ENCODE measurements at regions of chr6 and their contacts with region 1.

Region 1: DNA sequence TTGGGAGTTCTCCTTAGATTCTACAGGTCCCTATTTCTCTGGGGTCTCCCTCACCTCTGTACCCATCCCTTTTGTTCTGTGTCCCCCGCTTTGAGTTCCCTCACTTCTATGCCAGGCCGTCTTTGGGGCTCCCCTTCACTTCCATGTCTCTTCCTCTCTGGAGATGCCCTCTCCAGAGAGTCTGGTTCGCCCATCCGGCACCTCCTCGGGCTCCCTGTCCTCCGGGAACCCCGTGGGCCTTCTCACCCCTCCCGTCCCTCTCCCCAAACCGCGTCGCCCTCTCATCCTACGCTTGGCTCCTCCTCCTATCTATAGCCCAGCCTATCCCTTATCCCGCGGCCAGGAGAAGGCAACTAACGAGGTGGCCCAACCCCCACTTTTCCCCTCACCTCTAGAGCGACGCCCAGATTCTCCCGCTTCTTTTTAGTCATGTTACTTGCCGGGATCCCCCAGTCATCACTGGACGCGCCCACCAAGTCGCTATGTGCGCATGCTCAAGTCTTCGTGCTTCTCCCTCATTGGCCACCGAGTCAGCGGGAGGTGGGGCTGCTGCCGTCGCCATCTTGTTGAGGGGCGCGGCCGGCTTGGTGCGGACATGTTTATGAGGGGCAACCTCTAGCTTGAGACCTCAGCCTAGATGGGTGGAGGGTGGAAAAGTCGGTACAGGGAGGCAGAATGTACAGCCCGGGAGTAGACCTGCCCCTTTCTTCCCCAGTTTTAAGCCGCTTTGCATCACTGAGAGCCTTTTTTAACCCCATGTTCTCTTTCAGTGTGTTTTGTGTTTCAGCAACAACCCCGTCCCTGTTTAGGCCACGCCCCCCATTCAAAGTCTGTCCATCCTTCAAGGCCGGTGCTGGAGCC is at the start of gene CCDC167:
- DNase-seq: peak; percentile 96
- ATAC-seq: peak; percentile 89
- H3K4me3 ChIP-seq: peak within 1 kb of the TSS; percentile 84
- H3K27ac ChIP-seq: peak within 1 kb of the TSS; percentile 92
- H3K4me1 ChIP-seq: peaks cover 47% of the 10 kb centered on the region
- H3K27me3 ChIP-seq: no peaks in the 10 kb centered on the region
- CTCF ChIP-seq: no peak
- EP300 ChIP-seq: no peak
- POLR2A ChIP-seq: peak; percentile 72
- RAD21 ChIP-seq: no peak
- polyA plus RNA-seq, gene CCDC167: 323 to 380 TPM

Region 2: DNA sequence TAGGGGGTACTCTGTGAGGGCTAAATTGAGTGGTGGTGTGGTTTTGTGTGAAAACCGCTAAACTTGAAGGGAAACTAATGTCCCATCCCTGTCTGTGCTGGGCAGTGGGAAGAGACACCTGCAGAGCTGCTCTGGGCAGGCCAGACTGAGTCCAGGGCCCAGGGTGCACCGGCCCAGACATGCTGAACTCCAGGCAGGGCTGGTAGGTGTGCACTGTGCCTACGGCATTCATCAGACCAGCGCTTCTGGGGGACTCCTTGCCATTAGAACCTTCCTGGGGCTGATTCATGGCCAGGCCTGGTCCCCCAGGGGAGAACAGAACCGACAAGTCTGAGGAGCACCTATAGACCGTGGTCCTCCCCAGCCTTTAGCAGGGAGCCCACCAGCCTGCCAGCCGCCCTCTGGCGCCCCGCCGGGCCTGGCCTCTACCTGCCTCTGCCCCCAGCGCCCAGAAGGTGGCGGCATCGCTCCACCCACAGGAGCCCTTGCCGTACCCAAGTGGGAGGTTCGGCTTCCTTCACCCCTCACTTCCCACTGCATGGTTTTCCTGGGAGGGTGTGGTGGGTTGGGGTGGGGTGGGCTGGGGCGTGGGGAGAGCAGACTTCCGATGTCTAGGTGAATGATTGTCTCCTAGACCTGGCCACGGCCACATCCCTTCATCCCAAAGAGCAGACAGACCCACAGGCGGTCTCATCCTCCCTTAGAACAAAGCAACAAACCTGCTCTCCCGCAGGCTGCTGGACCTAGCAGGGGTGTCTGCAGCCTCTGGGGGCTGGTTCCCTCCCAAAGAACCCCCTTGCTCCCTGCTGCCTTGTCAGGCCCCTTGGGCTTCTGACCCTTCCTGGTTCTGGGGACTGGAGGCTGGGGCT is 15.5 kb before region 1 on chr6:
- CTCF ChIA-PET with region 1: interaction called, 18 read pairs
- POLR2A ChIA-PET with region 1: interaction called, 3 read pairs
- RAD21 ChIA-PET with region 1: interaction called, 5 read pairs
- SMC1A ChIA-PET with region 1: interaction called, 4 read pairs
- in situ Hi-C with region 1: no loop called
- intact Hi-C with region 1: no loop called
- DNase-seq: no peak
- ATAC-seq: peak; percentile 93
- H3K4me3 ChIP-seq: no peak overlapping the region
- H3K27ac ChIP-seq: no peak overlapping the region
- H3K4me1 ChIP-seq: peaks cover 7% of the 10 kb centered on the region; the same call in 1 of the 2 replicates
- H3K27me3 ChIP-seq: no peaks in the 10 kb centered on the region
- CTCF ChIP-seq: peak; percentile 85 to 97 (median 96); a peak in 5 of 6 replicates
- EP300 ChIP-seq: no peak
- POLR2A ChIP-seq: no peak; the same call in 1 of the 2 replicates
- RAD21 ChIP-seq: peak; percentile 97

Region 3: DNA sequence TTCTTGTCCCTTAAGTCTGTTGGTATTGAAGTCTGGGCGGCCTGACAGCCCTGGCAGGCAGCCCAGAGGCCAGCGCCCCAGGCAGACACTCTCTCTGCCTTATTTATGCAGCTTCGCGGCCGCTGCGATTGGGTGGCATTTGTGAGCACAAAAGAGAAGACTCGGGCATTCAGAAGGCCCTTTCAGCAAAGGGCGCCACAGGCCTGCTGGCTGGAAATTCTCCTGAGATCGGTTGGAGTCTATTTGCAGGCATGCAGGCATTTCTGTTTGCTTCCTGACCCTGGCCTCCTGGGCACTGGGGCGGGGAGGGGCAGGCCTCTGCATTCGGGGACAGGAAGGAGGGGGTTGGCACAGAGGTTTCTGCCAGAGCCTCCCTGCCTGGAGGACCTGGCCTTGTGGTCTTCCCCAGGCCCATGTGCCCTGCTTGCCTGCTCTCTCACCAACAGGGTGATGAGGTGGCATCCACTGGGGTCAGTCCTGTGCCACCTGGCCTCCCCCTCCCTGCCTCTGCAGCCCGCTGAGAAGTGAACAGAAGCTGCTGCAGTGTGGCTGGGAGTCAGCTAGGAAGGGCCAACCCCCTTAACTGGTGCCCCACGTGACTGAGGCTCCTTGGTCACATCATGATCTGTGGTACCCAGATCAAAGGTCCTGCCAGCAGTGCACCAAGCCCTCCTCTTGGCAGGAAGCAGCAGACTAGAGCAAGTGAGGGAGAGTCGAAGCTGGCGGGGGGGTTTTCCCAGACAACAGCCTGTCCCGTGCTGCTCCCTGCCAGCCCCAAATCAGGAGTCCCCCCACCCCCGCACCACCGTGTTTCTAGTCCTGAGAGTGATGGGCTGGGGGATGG is 16.6 kb after region 1 on chr6:
- CTCF ChIA-PET with region 1: interaction called, 9 read pairs
- POLR2A ChIA-PET with region 1: interaction called, 31 read pairs
- RAD21 ChIA-PET with region 1: interaction called, 19 read pairs
- SMC1A ChIA-PET with region 1: interaction called, 31 read pairs
- in situ Hi-C with region 1: no loop called
- intact Hi-C with region 1: no loop called
- DNase-seq: peak; percentile 78
- ATAC-seq: peak; percentile 94
- H3K4me3 ChIP-seq: 0 out of 2 replicates have a peak overlapping the region, but pooled peaks have one; percentile 10
- H3K27ac ChIP-seq: peak overlapping the region; percentile 65
- H3K4me1 ChIP-seq: peaks cover 33% of the 10 kb centered on the region
- H3K27me3 ChIP-seq: no peaks in the 10 kb centered on the region
- CTCF ChIP-seq: peak in 2 of 3 experiments; percentile 3 to 11; a peak in 1 of 6 replicates
- EP300 ChIP-seq: peak in 1 of 2 experiments; percentile 26; a peak in 1 of 4 replicates
- POLR2A ChIP-seq: peak; percentile 69
- RAD21 ChIP-seq: no peak

Region 4: DNA sequence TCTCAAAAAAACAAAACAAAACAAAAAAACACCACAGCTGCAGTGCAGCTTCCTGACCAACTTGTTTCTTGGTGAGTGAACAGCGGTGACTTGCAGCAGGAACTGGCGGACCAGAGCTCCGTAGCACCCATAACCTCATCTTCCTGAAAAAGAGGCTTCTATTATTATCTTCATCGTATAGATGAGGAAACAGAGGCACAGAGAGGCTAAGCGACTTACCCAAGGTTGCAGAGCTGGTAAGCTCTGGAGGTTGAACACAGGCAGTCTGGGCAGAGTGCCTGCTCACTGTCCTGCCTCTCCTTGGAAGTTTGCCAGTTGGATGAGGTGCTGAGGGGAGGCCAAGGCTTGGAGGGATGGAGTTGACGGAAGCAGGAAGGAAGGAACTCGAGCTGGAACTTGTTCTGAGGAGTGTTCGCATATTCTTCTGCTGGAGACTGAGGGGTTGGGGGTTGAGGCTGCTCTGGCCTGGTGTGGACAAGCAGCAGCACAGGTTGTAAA is 48.0 kb after region 1 on chr6:
- CTCF ChIA-PET with region 1: interaction called, 4 read pairs
- POLR2A ChIA-PET with region 1: interaction called, 4 read pairs
- RAD21 ChIA-PET with region 1: interaction called, 8 read pairs
- SMC1A ChIA-PET with region 1: interaction called, 6 read pairs
- in situ Hi-C with region 1: loop called (anchors 10 kb)
- intact Hi-C with region 1: no loop called
- DNase-seq: no peak
- ATAC-seq: peak; percentile 38
- H3K4me3 ChIP-seq: no peak overlapping the region
- H3K27ac ChIP-seq: peak overlapping the region; percentile 83
- H3K4me1 ChIP-seq: peaks cover 64% of the 10 kb centered on the region
- H3K27me3 ChIP-seq: no peaks in the 10 kb centered on the region
- CTCF ChIP-seq: no peak
- EP300 ChIP-seq: no peak
- POLR2A ChIP-seq: no peak
- RAD21 ChIP-seq: no peak

Region 5: GRCh38 chr6:37554480-37554819 is 54.8 kb after region 1 on chr6:
- CTCF ChIA-PET with region 1: interaction called, 5 read pairs
- POLR2A ChIA-PET with region 1: interaction called, 45 read pairs
- RAD21 ChIA-PET with region 1: interaction called, 15 read pairs
- SMC1A ChIA-PET with region 1: interaction called, 16 read pairs
- in situ Hi-C with region 1: loop called (anchors 10 kb)
- intact Hi-C with region 1: loop called (anchors 2 kb)
- DNase-seq: no peak
- ATAC-seq: peak; percentile 8
- H3K4me3 ChIP-seq: peak overlapping the region; percentile 81
- H3K27ac ChIP-seq: peak overlapping the region; percentile 91
- H3K4me1 ChIP-seq: peaks cover 86% of the 10 kb centered on the region
- H3K27me3 ChIP-seq: no peaks in the 10 kb centered on the region
- CTCF ChIP-seq: no peak
- EP300 ChIP-seq: no peak
- POLR2A ChIP-seq: no peak
- RAD21 ChIP-seq: no peak

Region 6: DNA sequence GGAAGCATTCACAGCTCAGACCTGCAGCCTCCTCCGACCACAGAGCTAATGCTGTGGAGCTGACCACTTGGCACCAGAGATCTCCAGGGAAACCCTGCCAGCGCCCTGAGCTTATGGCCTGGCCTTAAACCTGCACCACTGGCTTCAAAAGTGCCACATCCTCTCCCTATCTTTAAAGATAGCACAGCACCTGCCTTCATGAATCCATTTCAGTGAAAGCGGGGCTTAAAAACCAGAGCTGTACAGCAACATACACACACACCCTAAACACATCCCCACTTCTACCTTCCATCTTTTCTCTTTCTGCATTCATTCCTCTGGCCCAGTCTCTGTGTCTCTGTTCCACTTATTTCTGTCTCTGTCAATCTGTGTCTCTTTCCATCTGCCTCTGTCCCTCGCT is 59.8 kb after region 1 on chr6:
- CTCF ChIA-PET with region 1: interaction called, 13 read pairs
- POLR2A ChIA-PET with region 1: interaction called, 53 read pairs
- RAD21 ChIA-PET with region 1: interaction called, 23 read pairs
- SMC1A ChIA-PET with region 1: interaction called, 18 read pairs
- in situ Hi-C with region 1: loop called (anchors 10 kb)
- intact Hi-C with region 1: loop called (anchors 2 kb)
- DNase-seq: no peak
- ATAC-seq: no peak
- H3K4me3 ChIP-seq: peak overlapping the region; percentile 11; the same call in 1 of the 2 replicates
- H3K27ac ChIP-seq: peak overlapping the region; percentile 91
- H3K4me1 ChIP-seq: peaks cover 88% of the 10 kb centered on the region
- H3K27me3 ChIP-seq: no peaks in the 10 kb centered on the region
- CTCF ChIP-seq: no peak
- EP300 ChIP-seq: no peak
- POLR2A ChIP-seq: no peak
- RAD21 ChIP-seq: no peak

Measured in GM12878 (cell line).